Sigmoid colon (tissue), 7 donors: ENCODE measurements at regions of chr1 and their contacts with region 1.

Region 1: GRCh38 chr1:46179138-46180081 is 3.1 kb upstream of the P3R3URF start:
- DNase-seq: peak; percentile 92
- H3K4me3 ChIP-seq: no peak overlapping the region
- H3K27ac ChIP-seq: peak overlapping the region in 2 of 4 donors; percentile 5
- H3K4me1 ChIP-seq: peaks cover 0 to 22% (median 12%) of the 10 kb centered on the region in 4 donors
- H3K27me3 ChIP-seq: no peaks in the 10 kb centered on the region
- CTCF ChIP-seq: peak; percentile 92 to 99 (median 96)
- EP300 ChIP-seq: no peak
- POLR2A ChIP-seq: no peak

Region 2: DNA sequence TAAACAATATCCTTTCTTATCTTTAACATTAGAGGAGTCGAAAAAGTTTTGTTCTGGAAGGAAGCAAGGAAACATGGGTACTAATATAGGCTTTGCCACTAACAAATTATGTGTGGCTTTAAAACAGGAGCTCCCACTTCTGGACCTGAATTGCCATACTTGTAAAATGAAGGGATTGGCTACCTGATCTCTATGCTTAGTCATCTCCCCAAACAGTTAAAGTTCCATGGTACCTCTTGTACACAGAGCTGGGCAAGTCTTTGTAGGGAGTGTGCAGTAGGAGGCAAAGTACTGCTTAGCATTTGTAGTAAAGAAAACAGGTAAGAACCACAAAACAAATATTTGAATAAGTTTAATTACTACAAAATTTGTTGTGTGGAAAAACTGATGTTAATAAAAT is 294.7 kb before region 1 on chr1:
- intact Hi-C with region 1: no loop called
- DNase-seq: no peak
- H3K4me3 ChIP-seq: no peak overlapping the region
- H3K27ac ChIP-seq: no peak overlapping the region
- H3K4me1 ChIP-seq: peaks cover 0 to 19% (median 5%) of the 10 kb centered on the region in 4 donors
- H3K27me3 ChIP-seq: no peaks in the 10 kb centered on the region
- CTCF ChIP-seq: no peak
- EP300 ChIP-seq: no peak
- POLR2A ChIP-seq: no peak

Region 3: DNA sequence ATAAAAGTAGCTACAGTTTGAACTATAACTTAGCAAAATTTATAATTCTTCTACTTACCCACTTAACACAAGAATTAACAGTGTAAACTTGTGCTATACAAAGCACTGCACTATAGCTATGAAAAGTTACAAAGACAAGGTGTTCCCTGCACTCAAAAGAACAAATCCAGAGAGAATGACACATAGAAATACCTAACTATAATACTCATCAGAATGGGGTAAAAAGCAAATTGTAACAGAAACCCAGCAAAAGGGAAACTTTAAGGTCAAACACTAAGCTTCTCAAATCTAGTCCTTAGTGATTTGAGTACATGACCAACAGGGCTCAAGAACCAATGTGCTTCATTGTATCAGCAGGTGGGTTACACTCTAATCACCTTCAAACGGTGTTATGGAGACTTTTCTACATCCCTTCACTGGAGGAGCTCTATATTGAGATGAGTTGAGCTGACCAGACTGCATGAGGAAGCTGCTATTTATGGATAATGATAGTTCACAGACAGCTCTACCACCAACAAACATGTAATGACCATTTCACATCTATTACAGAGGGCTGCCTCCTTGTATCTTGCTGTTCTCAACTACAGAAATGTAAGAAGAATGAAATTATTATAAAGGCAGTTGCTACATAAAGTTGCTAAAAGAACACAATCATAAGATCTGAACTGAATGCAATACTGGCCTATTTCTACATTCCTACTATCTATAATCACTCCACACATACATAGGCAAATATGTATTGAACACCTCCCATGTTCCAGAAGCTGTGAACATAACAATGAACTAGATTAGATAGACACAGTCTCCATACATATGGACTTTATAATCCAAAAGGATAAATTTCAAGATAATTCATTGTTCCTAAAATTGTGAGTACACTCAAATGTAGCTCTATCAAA is 94.6 kb before region 1 on chr1:
- intact Hi-C with region 1: no loop called
- DNase-seq: no peak
- H3K4me3 ChIP-seq: no peak overlapping the region
- H3K27ac ChIP-seq: peak overlapping the region in 1 of 4 donors; percentile 35
- H3K4me1 ChIP-seq: no peaks in the 10 kb centered on the region
- H3K27me3 ChIP-seq: no peaks in the 10 kb centered on the region
- CTCF ChIP-seq: no peak
- EP300 ChIP-seq: no peak
- POLR2A ChIP-seq: no peak

Region 4: GRCh38 chr1:46098027-46098712 is 81.2 kb before region 1 on chr1:
- intact Hi-C with region 1: no loop called
- DNase-seq: no peak
- H3K4me3 ChIP-seq: no peak overlapping the region
- H3K27ac ChIP-seq: no peak overlapping the region
- H3K4me1 ChIP-seq: no peaks in the 10 kb centered on the region
- H3K27me3 ChIP-seq: no peaks in the 10 kb centered on the region
- CTCF ChIP-seq: no peak
- EP300 ChIP-seq: no peak
- POLR2A ChIP-seq: no peak

Region 5: DNA sequence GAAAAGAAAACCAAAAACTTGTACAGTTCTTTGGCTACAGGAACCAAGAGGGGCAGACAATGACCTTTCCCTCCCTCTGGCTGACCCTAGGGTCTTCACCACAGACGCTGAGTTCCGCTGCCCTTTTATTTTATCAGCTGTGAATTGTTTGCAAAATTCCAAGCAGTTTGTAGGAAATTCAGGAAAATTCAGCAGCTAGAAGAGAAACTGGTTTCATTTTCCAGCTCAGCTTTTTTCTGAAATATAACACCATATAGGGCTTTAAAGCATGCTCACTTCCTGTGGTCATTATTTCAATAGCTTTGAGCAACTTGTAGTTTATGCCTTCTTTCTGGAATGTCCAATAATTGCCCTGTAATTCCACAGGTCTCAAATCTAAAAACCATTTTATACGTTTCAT is 41.5 kb before region 1 on chr1:
- intact Hi-C with region 1: loop called (anchors 2 kb)
- DNase-seq: no peak
- H3K4me3 ChIP-seq: no peak overlapping the region
- H3K27ac ChIP-seq: peak overlapping the region in 1 of 4 donors; percentile 33
- H3K4me1 ChIP-seq: peaks cover 0 to 20% (median 15%) of the 10 kb centered on the region in 4 donors
- H3K27me3 ChIP-seq: no peaks in the 10 kb centered on the region
- CTCF ChIP-seq: no peak
- EP300 ChIP-seq: no peak
- POLR2A ChIP-seq: no peak